ENCODE measurements at regions of chr2 and their contacts with region 1.

Region 1: DNA sequence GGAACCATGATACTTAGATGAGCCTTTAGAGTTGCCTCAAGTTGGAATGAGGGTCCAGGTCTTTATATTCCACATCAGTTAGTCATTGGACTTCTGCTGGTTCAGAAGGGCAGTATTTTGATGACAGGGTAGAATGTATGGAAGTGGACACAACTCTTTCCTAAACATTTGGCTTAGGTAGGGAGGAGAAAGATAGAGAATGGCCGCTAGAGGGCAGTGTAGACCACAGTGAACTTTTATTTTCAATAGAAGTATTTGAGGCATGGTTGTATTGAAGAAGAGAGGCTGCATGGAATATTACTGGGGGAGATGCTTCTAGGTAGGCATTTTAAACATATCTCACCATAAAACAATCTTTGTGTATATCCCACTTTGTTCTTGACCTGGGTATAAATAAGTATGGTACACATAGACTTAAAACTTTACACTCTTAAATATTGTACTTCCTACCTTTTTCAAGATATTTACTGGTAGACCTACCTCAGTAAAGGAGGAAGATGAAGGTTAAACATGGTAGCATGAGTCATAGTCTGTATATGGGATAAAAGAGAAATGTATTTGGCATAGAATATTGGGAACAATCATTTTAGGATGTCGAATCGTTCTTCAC is 497.6 kb upstream of the FAM98A start:
- DNase-seq: peak; percentile 67
- ATAC-seq: peak; percentile 39
- H3K4me3 Mint-ChIP-seq: no peak overlapping the region
- H3K27ac Mint-ChIP-seq: no peak overlapping the region
- H3K4me1 Mint-ChIP-seq: no peaks in the 10 kb centered on the region
- H3K27me3 Mint-ChIP-seq: no peaks in the 10 kb centered on the region

Region 2: DNA sequence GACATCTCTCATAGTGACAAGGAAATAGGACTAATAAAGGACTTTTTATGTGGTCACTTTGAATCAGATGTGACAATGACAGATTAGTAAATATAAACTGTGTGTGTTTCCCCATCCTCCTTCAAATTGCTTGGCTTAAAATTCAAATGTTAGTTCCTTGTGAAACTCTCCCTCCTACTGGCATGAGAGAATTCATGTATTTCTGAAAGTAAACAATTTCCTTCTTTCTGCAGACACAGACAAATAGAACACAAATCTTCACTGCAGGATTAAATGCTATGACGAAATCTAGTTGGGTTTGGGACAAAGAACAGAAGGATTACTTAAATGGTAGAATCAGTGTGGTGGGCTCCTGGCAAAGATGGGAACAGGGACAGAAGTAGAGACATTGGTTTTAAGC is 168.9 kb before region 1 on chr2:
- CTCF ChIA-PET with region 1: no interaction called
- POLR2A ChIA-PET with region 1: no interaction called
- intact Hi-C with region 1: no loop called
- DNase-seq: no peak
- ATAC-seq: no peak
- H3K4me3 Mint-ChIP-seq: no peak overlapping the region
- H3K27ac Mint-ChIP-seq: no peak overlapping the region
- H3K4me1 Mint-ChIP-seq: no peaks in the 10 kb centered on the region
- H3K27me3 Mint-ChIP-seq: no peaks in the 10 kb centered on the region

Region 3: GRCh38 chr2:34179511-34179910 is 82.8 kb after region 1 on chr2:
- CTCF ChIA-PET with region 1: no interaction called
- POLR2A ChIA-PET with region 1: no interaction called
- intact Hi-C with region 1: no loop called
- DNase-seq: no peak
- ATAC-seq: no peak
- H3K4me3 Mint-ChIP-seq: no peak overlapping the region
- H3K27ac Mint-ChIP-seq: no peak overlapping the region
- H3K4me1 Mint-ChIP-seq: no peaks in the 10 kb centered on the region
- H3K27me3 Mint-ChIP-seq: no peaks in the 10 kb centered on the region

Region 4: GRCh38 chr2:34570266-34570872 is 473.7 kb after region 1 on chr2:
- CTCF ChIA-PET with region 1: no interaction called
- POLR2A ChIA-PET with region 1: no interaction called
- intact Hi-C with region 1: loop called in 1 of 2 experiments (anchors 5 kb)
- DNase-seq: no peak
- ATAC-seq: no peak
- H3K4me3 Mint-ChIP-seq: no peak overlapping the region
- H3K27ac Mint-ChIP-seq: no peak overlapping the region
- H3K4me1 Mint-ChIP-seq: no peaks in the 10 kb centered on the region
- H3K27me3 Mint-ChIP-seq: no peaks in the 10 kb centered on the region

Region 5: DNA sequence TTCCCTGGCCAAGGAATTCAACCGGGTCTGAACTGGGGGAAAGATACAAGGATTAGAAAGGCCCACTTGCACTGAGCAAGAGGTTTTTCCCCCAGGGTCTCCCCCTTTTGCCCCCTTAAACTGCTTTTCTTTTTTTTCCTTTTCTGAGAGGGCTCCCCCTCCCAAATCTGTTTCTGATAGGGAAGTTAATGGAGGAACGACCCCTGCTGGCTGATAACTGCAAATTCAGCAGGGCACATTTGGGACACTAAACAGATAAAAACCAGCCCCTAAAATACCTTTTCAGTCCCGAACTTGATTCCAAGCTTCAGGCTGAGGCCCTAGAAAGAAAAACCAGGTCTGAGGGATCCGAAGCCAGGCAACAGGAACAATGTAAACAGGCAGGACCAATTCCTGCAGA is 1246.5 kb after region 1 on chr2:
- CTCF ChIA-PET with region 1: no interaction called
- POLR2A ChIA-PET with region 1: no interaction called
- intact Hi-C with region 1: loop called (anchors 2 to 10 kb)
- DNase-seq: no peak
- ATAC-seq: no peak
- H3K4me3 Mint-ChIP-seq: no peak overlapping the region
- H3K27ac Mint-ChIP-seq: no peak overlapping the region
- H3K4me1 Mint-ChIP-seq: no peaks in the 10 kb centered on the region
- H3K27me3 Mint-ChIP-seq: no peaks in the 10 kb centered on the region

Region 6: DNA sequence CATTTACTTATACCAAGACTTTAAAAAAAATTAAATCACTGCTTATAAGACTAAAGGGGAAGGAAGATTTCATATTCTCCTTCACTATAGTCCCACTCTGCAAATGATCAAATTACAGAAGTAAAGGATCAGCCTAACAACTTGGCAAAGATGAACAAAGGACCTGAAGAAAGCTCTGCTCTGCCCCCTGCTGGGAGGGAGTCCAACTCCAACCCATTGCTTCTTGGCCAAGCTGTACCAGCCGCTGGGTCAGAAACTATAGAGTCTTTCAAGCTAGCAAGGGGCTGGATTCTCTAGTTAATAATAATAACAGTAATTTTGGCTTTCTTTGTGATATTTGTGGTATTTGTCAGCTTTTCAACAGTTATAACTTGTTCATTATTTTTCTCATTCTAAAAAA is 1331.9 kb after region 1 on chr2:
- CTCF ChIA-PET with region 1: no interaction called
- POLR2A ChIA-PET with region 1: no interaction called
- intact Hi-C with region 1: loop called in 1 of 2 experiments (anchors 5 kb)
- DNase-seq: peak; percentile 56
- ATAC-seq: peak; percentile 39
- H3K4me3 Mint-ChIP-seq: no peak overlapping the region
- H3K27ac Mint-ChIP-seq: no peak overlapping the region
- H3K4me1 Mint-ChIP-seq: no peaks in the 10 kb centered on the region
- H3K27me3 Mint-ChIP-seq: no peaks in the 10 kb centered on the region